Ovary (tissue), 10 donors: ENCODE measurements at regions of chr7 and their contacts with region 1.

Region 1: DNA sequence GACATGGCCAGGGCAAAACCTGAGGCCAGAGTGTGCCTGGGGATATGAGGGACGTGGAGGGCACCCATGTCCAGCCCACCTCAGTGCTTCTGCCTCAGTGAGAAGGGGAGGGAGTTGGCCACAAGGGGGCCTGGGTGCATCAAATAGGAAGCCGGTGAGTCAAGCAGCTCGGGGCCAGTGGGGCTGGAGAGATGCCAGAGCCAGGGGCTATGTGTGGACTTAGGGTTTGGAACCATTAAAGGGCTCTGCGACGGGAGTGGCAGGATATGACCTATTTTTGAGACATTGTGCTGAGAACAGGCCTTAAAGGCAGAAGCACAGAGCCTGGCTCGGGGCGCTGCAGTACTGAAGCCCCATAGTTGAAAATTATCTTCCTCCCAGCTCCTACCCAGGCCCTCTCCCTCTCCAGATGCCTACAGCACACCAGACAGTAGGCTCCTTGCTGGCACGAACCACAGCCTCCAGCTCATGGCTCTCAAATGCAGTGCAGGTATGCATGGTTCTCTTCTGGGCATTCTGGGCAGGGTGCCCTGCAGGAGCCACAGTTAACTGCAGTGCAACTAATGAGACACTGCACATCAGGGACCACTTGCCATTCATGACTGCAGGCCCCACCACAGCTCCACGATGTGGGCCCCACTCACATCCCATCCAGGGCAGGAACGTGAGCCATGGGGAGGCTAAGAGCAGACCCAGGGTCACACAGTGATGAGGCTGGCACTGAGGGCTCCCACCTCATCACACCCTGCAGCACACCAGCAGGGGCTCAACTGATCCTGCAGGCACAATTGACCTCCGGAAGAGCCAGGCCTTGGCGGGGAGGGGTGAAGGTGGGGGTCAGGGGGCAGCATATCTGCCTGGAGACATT is 7.2 kb upstream of the PGAM2 start:
- DNase-seq: peak; percentile 78 to 89 (median 84)
- H3K4me3 ChIP-seq: no peak overlapping the region
- H3K27ac ChIP-seq: peak overlapping the region in 1 of 2 donors; percentile 35
- H3K4me1 ChIP-seq: no peaks in the 10 kb centered on the region
- H3K27me3 ChIP-seq: no peaks in the 10 kb centered on the region
- CTCF ChIP-seq: peak; percentile 37 to 73 (median 56)
- EP300 ChIP-seq: no peak
- POLR2A ChIP-seq: no peak

Region 2: DNA sequence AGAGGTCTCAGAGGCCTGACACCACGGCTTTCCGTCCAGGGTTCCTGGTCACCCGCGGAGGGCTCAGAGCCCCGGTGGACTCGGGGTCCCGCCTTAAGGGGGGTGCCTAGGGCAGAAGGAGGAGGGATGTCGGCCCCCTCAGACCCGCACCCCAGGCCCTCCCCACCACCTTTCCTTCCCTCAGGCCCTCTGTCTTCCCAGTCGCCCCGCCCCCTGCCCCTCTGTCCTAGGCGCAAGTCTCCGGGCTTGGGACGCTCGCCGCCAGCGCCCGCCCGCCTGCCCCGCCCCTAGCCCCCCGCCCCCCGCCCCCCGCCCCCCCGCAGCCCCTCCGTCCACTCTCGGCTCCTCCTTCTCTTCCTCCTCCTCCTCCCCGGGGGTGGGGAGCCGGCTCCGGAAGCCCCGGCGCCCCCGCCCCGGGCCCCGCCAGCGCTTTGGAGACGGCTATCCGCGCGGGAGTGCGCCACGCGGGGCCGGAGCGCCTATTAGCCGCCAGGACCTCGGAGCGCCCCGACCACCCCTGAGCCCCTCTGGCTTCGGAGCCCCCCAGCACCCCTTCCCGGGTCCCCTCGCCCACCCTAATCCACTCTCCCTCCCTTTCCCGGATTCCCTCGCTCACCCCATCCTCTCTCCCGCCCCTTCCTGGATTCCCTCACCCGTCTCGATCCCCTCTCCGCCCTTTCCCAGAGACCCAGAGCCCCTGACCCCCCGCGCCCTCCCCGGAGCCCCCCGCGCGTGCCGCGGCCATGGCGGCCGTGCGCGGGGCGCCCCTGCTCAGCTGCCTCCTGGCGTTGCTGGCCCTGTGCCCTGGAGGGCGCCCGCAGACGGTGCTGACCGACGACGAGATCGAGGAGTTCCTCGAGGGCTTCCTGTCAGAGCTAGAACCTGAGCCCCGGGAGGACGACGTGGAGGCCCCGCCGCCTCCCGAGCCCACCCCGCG is 31.6 kb after region 1 on chr7 and contains the start of gene AEBP1:
- intact Hi-C with region 1: loop called in 1 of 4 experiments (anchors 5 kb)
- DNase-seq: peak; percentile 65 to 78 (median 73)
- H3K4me3 ChIP-seq: peak within 1 kb of the TSS; percentile 71
- H3K27ac ChIP-seq: peak within 1 kb of the TSS; percentile 89 to 93
- H3K4me1 ChIP-seq: peaks cover 21% of the 10 kb centered on the region
- H3K27me3 ChIP-seq: no peaks in the 10 kb centered on the region
- CTCF ChIP-seq: no peak
- EP300 ChIP-seq: no peak
- POLR2A ChIP-seq: peak; percentile 29
- total RNA-seq, gene AEBP1: 137 to 563 (median 327) TPM

Region 3: DNA sequence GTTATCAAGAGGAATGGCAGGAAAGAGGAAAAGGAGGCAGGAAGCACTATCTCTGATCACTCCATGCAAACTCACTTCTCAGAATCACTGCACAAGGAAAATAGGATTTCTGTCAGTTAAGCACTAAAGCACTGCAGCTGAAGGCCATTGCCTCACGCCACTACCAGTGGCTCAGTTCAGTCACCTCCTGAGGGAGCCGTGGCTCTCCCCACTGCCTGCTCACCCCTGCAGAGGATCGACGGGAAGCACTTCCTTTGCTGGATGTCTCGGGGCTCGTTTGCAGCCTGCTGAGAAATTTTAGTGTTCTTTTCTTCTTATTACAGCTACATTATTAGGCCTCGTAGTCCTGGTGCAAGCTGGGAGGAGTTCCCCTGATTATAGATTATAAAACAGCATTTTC is 1411.5 kb after region 1 on chr7:
- intact Hi-C with region 1: no loop called
- DNase-seq: no peak
- H3K4me3 ChIP-seq: no peak overlapping the region
- H3K27ac ChIP-seq: no peak overlapping the region
- H3K4me1 ChIP-seq: no peaks in the 10 kb centered on the region
- H3K27me3 ChIP-seq: no peaks in the 10 kb centered on the region
- CTCF ChIP-seq: no peak
- EP300 ChIP-seq: no peak
- POLR2A ChIP-seq: no peak